IMR-90 (cell line): ENCODE measurements at regions of chr16 and their contacts with region 1.

Region 1: DNA sequence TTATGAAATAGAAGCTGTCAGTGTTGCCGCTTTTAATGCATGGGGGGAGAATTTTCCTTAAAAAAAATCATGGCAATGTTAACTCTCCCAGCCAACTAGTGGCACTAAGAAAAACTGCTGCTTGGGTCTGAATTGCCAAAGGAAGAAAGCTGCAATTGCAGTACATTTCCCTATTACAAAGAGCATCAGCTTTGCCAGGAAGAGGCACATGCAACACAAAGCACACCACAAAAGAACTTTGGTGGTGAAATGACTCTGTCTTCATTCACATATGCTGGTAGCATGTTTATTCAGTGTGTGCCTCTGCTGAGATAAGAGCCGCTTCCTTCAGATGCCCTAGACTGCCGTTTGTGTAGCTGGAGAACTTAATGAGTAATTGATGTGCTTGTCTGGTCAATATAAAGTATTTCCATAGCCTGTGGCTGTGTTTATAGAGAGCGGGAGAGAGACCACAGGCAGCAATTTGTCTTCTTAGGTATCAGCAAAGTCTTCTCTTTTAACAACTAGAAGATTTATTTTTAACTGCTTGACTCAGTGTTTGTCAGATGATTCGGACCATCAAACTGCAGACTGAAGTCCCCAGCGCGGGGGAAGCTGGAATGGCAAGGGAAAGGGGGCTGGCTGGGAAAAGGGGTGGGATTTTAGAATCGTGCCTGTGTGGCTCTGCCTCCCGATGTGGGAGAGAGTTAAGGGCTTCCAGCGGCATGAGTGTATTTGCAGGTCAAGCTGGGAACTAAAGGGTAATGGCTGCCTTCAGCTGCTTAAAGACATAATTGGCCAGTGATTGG is 115.1 kb downstream of the MRTFB start:
- DNase-seq: peak; percentile 79
- ATAC-seq: peak; percentile 79
- H3K4me3 ChIP-seq: peak overlapping the region; percentile 10; the same call in 1 of the 2 replicates
- H3K27ac ChIP-seq: no peak overlapping the region
- H3K4me1 ChIP-seq: peaks cover 8% of the 10 kb centered on the region
- H3K27me3 ChIP-seq: 0 out of 2 replicates have a peak, but pooled peaks cover 2% of the 10 kb centered on the region
- CTCF ChIP-seq: peak; percentile 42
- POLR2A ChIP-seq: no peak
- RAD21 ChIP-seq: peak; percentile 37

Region 2: GRCh38 chr16:14232106-14232864 is 46.1 kb after region 1 on chr16:
- CTCF ChIA-PET with region 1: no interaction called
- POLR2A ChIA-PET with region 1: no interaction called
- dilution Hi-C with region 1: no loop called
- in situ Hi-C with region 1: no loop called
- intact Hi-C with region 1: loop called (anchors 5 kb)
- DNase-seq: peak; percentile 72
- ATAC-seq: peak; percentile 83
- H3K4me3 ChIP-seq: no peak overlapping the region
- H3K27ac ChIP-seq: no peak overlapping the region
- H3K4me1 ChIP-seq: peaks cover 8% of the 10 kb centered on the region
- H3K27me3 ChIP-seq: no peaks in the 10 kb centered on the region
- CTCF ChIP-seq: no peak
- POLR2A ChIP-seq: no peak
- RAD21 ChIP-seq: no peak